BJ (cell line): ENCODE measurements at regions of chr10 and their contacts with region 1.

Region 1: DNA sequence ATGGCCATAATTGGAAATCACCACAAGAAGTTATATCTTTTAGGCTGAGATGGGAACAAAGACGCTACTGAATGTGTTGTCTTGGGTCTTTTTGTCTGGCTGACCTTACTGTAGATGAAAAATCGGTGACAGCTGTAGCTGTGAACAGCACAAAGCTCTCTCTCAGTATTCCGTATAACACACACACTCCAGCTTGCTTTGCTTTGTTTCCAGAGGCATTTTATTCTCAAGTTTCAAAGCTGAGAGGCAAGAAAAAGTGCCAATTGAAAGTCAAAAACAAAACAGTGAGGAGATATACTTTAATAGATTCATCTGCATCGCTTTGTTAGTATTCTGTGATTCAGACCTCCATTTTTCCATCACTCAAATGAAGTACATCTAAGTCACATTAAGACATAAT is 39.6 kb upstream of the CABCOCO1 start:
- DNase-seq: no peak
- H3K4me3 ChIP-seq: no peak overlapping the region
- H3K27me3 ChIP-seq: no peaks in the 10 kb centered on the region
- CTCF ChIP-seq: no peak

Region 2: DNA sequence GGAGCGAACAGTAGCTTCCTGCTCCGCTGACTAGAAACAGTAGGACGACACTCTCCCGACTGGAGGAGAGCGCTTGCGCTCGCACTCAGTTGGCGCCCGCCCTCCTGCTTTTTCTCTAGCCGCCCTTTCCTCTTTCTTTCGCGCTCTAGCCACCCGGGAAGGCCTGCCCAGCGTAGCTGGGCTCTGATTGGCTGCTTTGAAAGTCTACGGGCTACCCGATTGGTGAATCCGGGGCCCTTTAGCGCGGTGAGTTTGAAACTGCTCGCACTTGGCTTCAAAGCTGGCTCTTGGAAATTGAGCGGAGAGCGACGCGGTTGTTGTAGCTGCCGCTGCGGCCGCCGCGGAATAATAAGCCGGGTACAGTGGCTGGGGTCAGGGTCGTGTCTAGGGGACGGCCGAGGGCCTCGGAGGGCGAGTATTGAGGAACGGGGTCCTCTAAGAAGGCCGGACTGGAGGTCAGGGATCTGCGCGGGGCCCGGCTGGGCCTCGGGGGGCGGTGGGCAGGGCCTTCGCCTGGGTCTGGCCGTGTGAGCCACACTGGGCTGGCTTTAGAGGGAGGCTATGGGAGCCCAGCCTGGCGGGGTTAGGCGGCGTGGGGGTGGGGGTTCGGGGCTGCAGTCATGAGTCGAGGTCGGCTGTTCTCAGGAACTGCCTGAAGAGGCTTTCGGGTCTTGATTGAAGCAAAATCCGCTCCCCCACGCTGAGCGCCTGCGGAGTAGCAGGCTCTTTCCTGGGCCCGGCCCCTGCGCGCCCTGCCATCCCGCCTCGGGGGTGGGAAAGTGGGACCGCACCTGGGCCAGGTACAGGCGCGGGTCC is 844.7 kb before region 1 on chr10 and contains the start of gene CDK1:
- CTCF ChIA-PET with region 1: no interaction called
- POLR2A ChIA-PET with region 1: interaction called, 26 read pairs
- DNase-seq: peak; percentile 92
- H3K4me3 ChIP-seq: peak within 1 kb of the TSS; percentile 69
- H3K27me3 ChIP-seq: no peaks in the 10 kb centered on the region
- CTCF ChIP-seq: no peak
- polyA plus RNA-seq, gene CDK1: 16.8 and 30.6 TPM in 2 replicates

Region 3: GRCh38 chr10:61847087-61847486 is 223.9 kb after region 1 on chr10:
- CTCF ChIA-PET with region 1: no interaction called
- POLR2A ChIA-PET with region 1: no interaction called
- DNase-seq: no peak
- H3K4me3 ChIP-seq: no peak overlapping the region
- H3K27me3 ChIP-seq: no peaks in the 10 kb centered on the region
- CTCF ChIP-seq: no peak